Panc1 (cell line): ENCODE measurements at regions of chr11 and their contacts with region 1.

Region 1: GRCh38 chr11:66081505-66081904 is 11.4 kb downstream of the PACS1 start:
- DNase-seq: no peak
- ATAC-seq: 0 out of 2 replicates have a peak, but pooled peaks have one; percentile 18
- H3K4me3 ChIP-seq: no peak overlapping the region
- H3K27ac ChIP-seq: peak overlapping the region; percentile 12; the same call in 1 of the 2 replicates
- H3K4me1 ChIP-seq: peaks cover 50% of the 10 kb centered on the region
- H3K27me3 ChIP-seq: no peaks in the 10 kb centered on the region
- CTCF ChIP-seq: no peak

Region 2: DNA sequence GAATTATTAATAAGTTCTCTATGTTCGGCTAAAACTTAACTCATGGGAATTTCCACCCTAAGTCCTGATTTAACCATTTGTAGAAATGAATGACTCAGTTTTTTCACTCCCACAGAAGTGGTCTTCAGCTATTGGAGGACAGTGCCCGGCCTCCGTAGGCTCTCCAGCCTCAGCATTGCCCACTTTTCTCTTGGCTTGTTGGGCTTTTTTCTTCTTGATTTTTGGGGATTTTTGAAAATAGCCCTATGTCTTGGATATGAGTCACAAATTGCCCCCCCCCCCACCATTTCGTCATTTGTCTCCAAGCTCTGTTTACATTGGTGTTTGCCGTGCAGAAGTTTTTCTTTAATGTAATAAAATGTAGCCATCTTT is 55.2 kb after region 1 on chr11:
- CTCF ChIA-PET with region 1: no interaction called
- POLR2A ChIA-PET with region 1: no interaction called
- in situ Hi-C with region 1: no loop called
- intact Hi-C with region 1: loop called (anchors 5 kb)
- DNase-seq: no peak
- ATAC-seq: no peak
- H3K4me3 ChIP-seq: no peak overlapping the region
- H3K27ac ChIP-seq: no peak overlapping the region
- H3K4me1 ChIP-seq: peaks cover 10% of the 10 kb centered on the region; the same call in 1 of the 2 replicates
- H3K27me3 ChIP-seq: no peaks in the 10 kb centered on the region
- CTCF ChIP-seq: no peak

Region 3: DNA sequence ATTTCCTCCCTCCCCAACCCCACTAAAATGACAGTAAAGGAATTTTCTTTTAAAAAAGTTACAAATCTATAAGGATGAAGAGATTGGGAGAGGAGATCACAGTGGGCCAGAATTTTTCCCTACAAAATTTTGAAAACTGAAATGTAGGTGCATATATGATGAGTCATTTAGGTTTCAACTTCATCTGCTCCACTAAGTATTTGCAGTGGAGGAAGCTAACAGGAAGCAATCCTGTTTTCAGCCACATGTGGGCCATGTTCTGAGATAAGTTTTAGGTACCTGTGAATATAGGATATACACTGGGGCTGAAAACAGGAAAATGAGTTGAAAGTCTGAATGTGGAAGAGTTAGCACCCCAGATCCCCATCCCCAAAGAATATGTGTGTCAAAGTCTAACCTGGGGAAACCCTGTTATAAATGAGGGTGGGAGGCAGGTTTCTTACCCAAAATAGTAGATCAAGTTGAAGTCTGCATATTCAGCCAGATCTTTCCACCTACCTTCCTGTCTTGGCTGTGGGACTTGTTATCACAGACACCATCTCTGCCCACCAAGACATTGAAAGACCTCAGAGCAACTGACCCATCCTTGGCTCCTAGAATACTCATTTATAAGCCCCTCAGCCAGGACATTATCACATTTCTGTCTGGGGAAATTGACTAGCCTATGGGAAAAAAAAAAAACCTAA is 75.8 kb after region 1 on chr11:
- CTCF ChIA-PET with region 1: interaction called, 12 read pairs
- POLR2A ChIA-PET with region 1: no interaction called
- in situ Hi-C with region 1: no loop called
- intact Hi-C with region 1: no loop called
- DNase-seq: no peak
- ATAC-seq: no peak
- H3K4me3 ChIP-seq: no peak overlapping the region
- H3K27ac ChIP-seq: no peak overlapping the region
- H3K4me1 ChIP-seq: no peaks in the 10 kb centered on the region
- H3K27me3 ChIP-seq: no peaks in the 10 kb centered on the region
- CTCF ChIP-seq: no peak

Region 4: DNA sequence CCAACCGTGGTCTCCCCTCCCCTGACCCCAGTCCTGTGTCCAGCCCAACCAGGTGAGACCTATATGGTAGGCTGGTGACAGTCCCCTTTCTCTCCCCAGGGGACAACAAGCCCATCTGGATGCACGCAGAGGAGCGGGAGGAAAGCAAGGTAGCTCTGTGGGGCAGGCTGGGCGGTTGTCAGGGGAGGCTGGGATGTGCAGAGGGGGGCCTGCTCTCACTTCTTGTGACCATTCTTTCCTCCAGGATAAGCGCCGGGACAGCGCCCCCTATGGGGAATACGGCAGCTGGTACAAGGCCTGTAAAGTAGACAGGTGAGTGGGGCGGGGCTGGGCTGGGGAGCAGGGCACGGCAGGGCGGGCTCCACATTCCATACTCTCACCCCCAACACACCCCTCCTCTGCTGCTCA is 183.4 kb after region 1 on chr11:
- CTCF ChIA-PET with region 1: interaction called, 11 read pairs
- POLR2A ChIA-PET with region 1: no interaction called
- in situ Hi-C with region 1: no loop called
- intact Hi-C with region 1: no loop called
- DNase-seq: no peak
- ATAC-seq: no peak
- H3K4me3 ChIP-seq: no peak overlapping the region
- H3K27ac ChIP-seq: no peak overlapping the region
- H3K4me1 ChIP-seq: peaks cover 12% of the 10 kb centered on the region
- H3K27me3 ChIP-seq: no peaks in the 10 kb centered on the region
- CTCF ChIP-seq: peak; percentile 84; the same call in 1 of the 2 replicates